Activated naive CD4-positive, alpha-beta T cell treated with anti-CD3 and anti-CD28 coated beads for 36 hours (primary cell): ENCODE measurements at regions of chr2 and their contacts with region 1.

Region 1: DNA sequence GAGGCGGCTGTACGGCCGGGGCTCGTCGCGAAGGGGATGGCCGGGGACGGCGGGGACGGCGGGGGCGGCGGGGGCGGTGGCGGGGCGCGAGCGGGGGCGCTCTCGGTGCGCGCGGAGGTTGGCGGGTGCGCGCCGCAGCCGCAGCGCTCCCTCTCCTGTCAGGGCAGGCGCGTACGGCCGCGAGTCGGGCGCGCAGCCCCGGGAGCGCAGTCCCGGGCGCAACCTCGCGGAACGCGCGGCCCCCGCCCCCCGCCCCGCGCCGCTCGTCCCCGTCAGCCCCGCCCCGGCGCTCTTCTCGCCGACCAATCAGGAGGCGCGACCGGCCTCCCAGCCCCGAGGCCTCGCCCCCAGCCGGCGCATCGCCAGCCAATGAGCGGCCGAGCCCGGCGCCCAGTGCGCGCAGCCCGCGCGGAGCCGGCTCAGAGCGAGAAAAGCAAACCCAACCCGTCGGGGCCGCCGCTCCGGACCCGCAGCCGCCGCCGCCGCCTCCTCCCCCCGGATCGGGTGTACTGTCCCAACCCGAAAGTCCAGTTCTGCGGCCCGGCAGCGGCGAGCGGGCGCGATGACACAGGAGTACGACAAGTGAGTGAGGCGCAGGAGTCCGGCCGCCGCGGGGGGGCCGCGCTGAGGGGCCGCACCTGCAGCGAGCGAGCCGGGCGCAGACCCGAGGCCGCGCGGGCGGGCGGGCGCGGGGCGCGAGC is at the start of gene GRHL1:
- DNase-seq: peak; percentile 88
- H3K4me3 Mint-ChIP-seq: peak within 1 kb of the TSS; percentile 75
- H3K27ac Mint-ChIP-seq: no peak within 1 kb of the TSS
- H3K4me1 Mint-ChIP-seq: peaks cover 2% of the 10 kb centered on the region
- H3K27me3 Mint-ChIP-seq: peaks cover 32% of the 10 kb centered on the region
- total RNA-seq, gene GRHL1: 0.69 to 0.79 TPM

Region 2: DNA sequence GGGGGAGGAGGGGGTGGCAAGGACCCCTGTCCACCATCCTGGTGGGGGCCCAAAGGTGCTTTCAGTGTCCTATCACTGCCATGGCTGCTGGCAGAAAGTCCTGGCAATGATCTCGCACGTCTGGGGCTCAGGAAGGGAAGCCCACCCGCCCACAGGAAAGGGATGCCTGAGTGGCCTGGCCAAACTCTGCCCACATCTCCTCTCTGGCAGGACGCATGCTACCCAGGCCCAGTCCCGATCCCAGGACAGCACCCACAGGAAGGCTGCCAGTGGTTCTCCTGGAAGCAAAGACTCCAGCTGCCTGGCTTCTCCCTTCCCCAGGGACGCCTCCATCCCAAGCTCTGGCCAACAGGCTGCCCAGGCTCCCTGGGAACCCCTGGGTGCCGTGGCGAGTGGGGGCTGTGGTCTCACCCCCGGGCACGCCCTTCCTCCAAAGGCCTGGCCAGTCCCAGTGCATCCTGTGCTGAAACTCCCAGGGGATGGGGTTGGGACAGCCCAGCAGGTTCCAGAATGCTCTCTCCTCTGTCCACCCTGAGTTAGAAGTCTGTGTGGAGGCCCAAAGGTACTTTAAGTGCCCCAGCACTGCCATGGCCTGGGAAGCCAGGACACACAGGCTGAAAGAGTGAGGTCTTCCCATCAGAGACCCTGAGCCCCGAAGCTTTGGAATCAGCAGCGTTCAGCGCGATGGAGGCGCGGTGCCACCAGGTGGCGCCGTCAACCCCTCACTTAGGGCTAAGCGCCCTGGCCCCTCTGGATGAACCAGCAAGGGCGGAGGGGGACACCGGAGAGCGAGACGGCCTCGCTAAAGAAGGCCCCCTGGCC is 137.9 kb before region 1 on chr2:
- CTCF ChIA-PET with region 1: interaction called, 10 read pairs
- intact Hi-C with region 1: loop called (anchors 10 kb)
- DNase-seq: peak; percentile 75
- H3K4me3 Mint-ChIP-seq: no peak overlapping the region
- H3K27ac Mint-ChIP-seq: no peak overlapping the region
- H3K4me1 Mint-ChIP-seq: peaks cover 12% of the 10 kb centered on the region
- H3K27me3 Mint-ChIP-seq: no peaks in the 10 kb centered on the region

Region 3: GRCh38 chr2:9975805-9976447 is 24.5 kb after region 1 on chr2:
- CTCF ChIA-PET with region 1: no interaction called
- intact Hi-C with region 1: loop called (anchors 2 kb)
- DNase-seq: peak; percentile 53
- H3K4me3 Mint-ChIP-seq: no peak overlapping the region
- H3K27ac Mint-ChIP-seq: no peak overlapping the region
- H3K4me1 Mint-ChIP-seq: peaks cover 40% of the 10 kb centered on the region
- H3K27me3 Mint-ChIP-seq: peaks cover 4% of the 10 kb centered on the region